MCF 10A (cell line): ENCODE measurements at regions of chr7 and their contacts with region 1.

Region 1: DNA sequence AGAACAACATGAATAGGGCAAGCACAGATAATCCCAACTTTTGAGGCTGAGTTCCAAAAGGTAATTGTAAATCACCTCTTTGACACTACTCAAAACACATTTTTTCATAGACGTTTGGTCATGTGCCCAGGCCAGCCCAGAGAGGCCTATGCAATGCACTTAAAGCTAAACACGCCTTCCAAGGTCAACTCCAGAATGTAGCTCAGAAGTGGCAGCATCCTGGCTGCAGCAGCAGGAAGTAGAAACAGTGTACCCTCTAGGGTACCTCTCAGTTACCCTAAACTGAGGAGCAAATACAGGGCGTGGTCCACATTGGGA is 58.7 kb downstream of the OSBPL3 start:
- DNase-seq: peak; percentile 67
- H3K4me3 Mint-ChIP-seq: no peak overlapping the region
- H3K27ac Mint-ChIP-seq: peak overlapping the region; percentile 5
- H3K4me1 Mint-ChIP-seq: peaks cover 51% of the 10 kb centered on the region
- H3K27me3 Mint-ChIP-seq: no peaks in the 10 kb centered on the region
- CTCF ChIP-seq: no peak

Region 2: DNA sequence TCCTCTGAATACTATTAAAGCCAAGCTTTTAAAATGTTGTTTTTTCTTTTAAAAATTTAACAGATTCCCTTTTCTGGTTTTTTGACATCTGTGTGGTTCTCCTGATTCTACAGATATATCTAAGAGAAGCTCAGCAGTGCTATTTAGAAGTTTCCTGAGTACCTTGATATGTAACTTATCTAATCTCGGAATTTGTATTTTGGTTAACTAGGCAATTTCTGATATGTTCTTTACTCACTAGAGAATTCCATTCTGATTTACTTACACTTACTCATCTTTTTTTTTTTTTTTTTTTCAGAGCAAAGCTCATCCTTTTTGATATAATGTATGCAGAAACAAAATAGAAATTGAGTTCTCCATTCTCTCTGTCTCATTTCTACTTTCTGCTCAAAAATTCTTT is 284.3 kb before region 1 on chr7:
- CTCF ChIA-PET with region 1: no interaction called
- POLR2A ChIA-PET with region 1: no interaction called
- intact Hi-C with region 1: no loop called
- DNase-seq: no peak
- H3K4me3 Mint-ChIP-seq: no peak overlapping the region
- H3K27ac Mint-ChIP-seq: no peak overlapping the region
- H3K4me1 Mint-ChIP-seq: no peaks in the 10 kb centered on the region
- H3K27me3 Mint-ChIP-seq: no peaks in the 10 kb centered on the region
- CTCF ChIP-seq: no peak

Region 3: GRCh38 chr7:24965831-24966709 is 44.7 kb after region 1 on chr7:
- CTCF ChIA-PET with region 1: interaction called, 4 read pairs
- POLR2A ChIA-PET with region 1: interaction called, 11 read pairs
- intact Hi-C with region 1: loop called (anchors 5 kb)
- DNase-seq: no peak
- H3K4me3 Mint-ChIP-seq: no peak overlapping the region
- H3K27ac Mint-ChIP-seq: peak overlapping the region; percentile 17
- H3K4me1 Mint-ChIP-seq: peaks cover 51% of the 10 kb centered on the region
- H3K27me3 Mint-ChIP-seq: no peaks in the 10 kb centered on the region
- CTCF ChIP-seq: no peak